CD4-positive, alpha-beta memory T cell (primary cell): ENCODE measurements at regions of chr19 and their contacts with region 1.

Region 1: DNA sequence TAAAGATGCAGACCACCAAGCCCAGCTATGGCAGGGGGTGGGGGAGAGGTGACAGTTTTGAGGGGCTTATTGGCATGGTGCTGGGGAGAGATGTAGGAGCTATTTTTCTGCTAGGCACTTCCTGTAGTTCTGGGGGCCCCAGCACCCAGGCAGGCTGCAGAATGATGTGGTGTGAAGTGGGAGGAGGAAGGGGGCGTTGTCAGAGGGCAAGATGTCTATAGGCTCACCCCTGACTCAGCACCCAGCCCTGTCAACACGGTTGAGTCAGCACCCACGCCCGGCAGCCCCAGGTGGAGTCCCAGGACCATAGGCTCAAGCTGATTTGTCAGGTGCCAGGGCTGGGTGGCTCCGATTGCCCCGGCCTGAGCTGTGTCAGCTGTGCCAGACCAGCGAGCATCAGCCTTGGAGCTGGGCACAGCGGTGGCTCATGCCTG is 5.8 kb downstream of the KLF2 start:
- DNase-seq: peak; percentile 93 to 99 (median 96)
- H3K4me3 ChIP-seq: peak overlapping the region in 1 of 2 donors; percentile 11
- H3K4me3 Mint-ChIP-seq: peak overlapping the region; percentile 97 to 100 (median 99)
- H3K27ac ChIP-seq: peak overlapping the region; percentile 83
- H3K27ac Mint-ChIP-seq: peak overlapping the region; percentile 92 to 99 (median 98)
- H3K4me1 ChIP-seq: peaks cover 38% of the 10 kb centered on the region
- H3K4me1 Mint-ChIP-seq: peaks cover 25 to 77% (median 37%) of the 10 kb centered on the region in 4 donors
- H3K27me3 ChIP-seq: no peaks in the 10 kb centered on the region
- H3K27me3 Mint-ChIP-seq: peaks cover 0 to 7% of the 10 kb centered on the region in 2 donors

Region 2: GRCh38 chr19:16070366-16070990 is 259.9 kb before region 1 on chr19:
- CTCF ChIA-PET with region 1: no interaction called
- POLR2A ChIA-PET with region 1: interaction called, 29 read pairs
- intact Hi-C with region 1: loop called (anchors 5 kb)
- DNase-seq: peak; percentile 87 to 98 (median 94)
- H3K4me3 ChIP-seq: peak overlapping the region in 1 of 2 donors; percentile 46
- H3K4me3 Mint-ChIP-seq: peak overlapping the region in 3 of 8 donors; percentile 60 to 80 (median 77)
- H3K27ac ChIP-seq: peak overlapping the region; percentile 89
- H3K27ac Mint-ChIP-seq: no peak overlapping the region
- H3K4me1 ChIP-seq: peaks cover 78% of the 10 kb centered on the region
- H3K4me1 Mint-ChIP-seq: peaks cover 25 to 46% (median 38%) of the 10 kb centered on the region in 4 donors
- H3K27me3 ChIP-seq: no peaks in the 10 kb centered on the region
- H3K27me3 Mint-ChIP-seq: no peaks in the 10 kb centered on the region

Region 3: DNA sequence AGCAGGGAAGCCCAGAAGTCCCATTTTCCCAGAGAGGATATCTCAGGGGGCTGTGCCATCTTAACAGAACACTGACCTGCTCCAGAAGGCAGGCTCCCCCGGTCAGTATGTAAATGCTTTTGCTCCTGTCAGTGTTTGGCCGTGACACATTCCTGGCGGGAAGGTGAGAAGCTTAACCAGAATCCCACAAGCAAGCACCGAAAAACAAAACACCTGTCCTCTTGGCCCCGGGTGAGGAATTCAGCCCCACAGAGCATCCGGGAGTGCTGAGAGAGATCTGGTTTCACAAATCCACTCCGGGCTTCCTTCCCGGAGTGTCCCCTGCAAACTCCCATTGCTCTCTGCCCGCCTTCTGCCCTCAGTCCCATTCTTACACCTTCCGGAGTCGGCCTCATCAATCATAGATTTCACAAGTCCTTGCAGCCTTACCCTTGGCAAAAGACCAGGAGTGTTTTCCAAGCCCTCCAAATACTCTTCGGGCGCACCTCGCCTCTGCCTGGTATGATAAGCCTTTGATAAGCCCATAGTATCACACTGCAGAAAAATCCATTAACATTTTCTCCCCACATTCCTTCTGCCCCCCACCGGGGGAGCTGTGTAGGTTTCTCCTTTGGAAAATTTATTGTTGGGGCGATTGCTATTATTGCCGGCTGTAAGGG is 241.9 kb before region 1 on chr19:
- CTCF ChIA-PET with region 1: no interaction called
- POLR2A ChIA-PET with region 1: interaction called, 14 read pairs
- intact Hi-C with region 1: no loop called
- DNase-seq: peak in 1 of 5 donors; percentile 10
- H3K4me3 ChIP-seq: no peak overlapping the region
- H3K4me3 Mint-ChIP-seq: peak overlapping the region in 4 of 8 donors; percentile 15 to 54 (median 34)
- H3K27ac ChIP-seq: no peak overlapping the region
- H3K27ac Mint-ChIP-seq: peak overlapping the region; percentile 61 to 82 (median 72)
- H3K4me1 ChIP-seq: peaks cover 53% of the 10 kb centered on the region
- H3K4me1 Mint-ChIP-seq: peaks cover 27 to 58% (median 36%) of the 10 kb centered on the region in 4 donors
- H3K27me3 ChIP-seq: no peaks in the 10 kb centered on the region
- H3K27me3 Mint-ChIP-seq: no peaks in the 10 kb centered on the region

Region 4: DNA sequence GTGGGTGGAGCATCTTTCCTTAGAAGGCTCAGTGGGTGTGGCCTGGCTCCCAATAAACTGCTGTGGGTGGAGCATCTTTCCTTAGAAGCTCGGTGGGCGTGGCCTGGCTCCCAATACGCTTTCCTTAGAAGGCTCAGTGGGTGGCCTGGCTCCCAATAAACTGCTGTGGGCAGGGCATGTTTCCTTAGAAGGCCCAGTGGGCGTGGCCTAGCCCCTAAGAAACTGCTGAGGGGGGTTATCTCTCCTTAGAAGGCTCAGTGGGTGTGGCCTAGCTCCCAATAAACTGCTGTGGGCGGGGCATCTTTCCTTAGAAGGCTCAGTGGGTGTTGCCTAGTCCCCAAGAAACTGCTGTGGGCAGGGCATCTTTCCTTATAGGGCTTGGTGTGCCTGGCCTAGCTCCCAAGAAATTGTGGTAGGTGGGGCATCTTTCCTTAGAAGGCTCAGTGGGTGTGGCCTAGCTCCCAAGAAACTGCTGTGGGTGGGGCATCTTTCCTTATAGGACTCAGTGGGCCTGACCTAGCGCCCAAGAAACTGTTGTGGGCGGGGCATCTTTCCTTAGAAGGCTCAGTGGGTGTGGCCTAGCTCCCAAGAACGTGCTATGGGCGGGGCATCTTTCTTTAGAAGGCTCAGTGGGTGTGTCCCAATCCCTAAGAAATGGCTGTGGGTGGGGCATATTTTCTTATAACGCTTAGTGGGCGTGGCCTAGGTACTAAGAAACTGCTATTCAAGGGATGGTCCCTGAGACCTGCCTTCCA is 176.6 kb before region 1 on chr19:
- CTCF ChIA-PET with region 1: no interaction called
- POLR2A ChIA-PET with region 1: no interaction called
- intact Hi-C with region 1: no loop called
- DNase-seq: no peak
- H3K4me3 ChIP-seq: no peak overlapping the region
- H3K4me3 Mint-ChIP-seq: no peak overlapping the region
- H3K27ac ChIP-seq: no peak overlapping the region
- H3K27ac Mint-ChIP-seq: peak overlapping the region in 1 of 7 donors; percentile 86
- H3K4me1 ChIP-seq: no peaks in the 10 kb centered on the region
- H3K4me1 Mint-ChIP-seq: peaks cover 0 to 4% (median under 1%) of the 10 kb centered on the region in 4 donors
- H3K27me3 ChIP-seq: no peaks in the 10 kb centered on the region
- H3K27me3 Mint-ChIP-seq: no peaks in the 10 kb centered on the region

Region 5: DNA sequence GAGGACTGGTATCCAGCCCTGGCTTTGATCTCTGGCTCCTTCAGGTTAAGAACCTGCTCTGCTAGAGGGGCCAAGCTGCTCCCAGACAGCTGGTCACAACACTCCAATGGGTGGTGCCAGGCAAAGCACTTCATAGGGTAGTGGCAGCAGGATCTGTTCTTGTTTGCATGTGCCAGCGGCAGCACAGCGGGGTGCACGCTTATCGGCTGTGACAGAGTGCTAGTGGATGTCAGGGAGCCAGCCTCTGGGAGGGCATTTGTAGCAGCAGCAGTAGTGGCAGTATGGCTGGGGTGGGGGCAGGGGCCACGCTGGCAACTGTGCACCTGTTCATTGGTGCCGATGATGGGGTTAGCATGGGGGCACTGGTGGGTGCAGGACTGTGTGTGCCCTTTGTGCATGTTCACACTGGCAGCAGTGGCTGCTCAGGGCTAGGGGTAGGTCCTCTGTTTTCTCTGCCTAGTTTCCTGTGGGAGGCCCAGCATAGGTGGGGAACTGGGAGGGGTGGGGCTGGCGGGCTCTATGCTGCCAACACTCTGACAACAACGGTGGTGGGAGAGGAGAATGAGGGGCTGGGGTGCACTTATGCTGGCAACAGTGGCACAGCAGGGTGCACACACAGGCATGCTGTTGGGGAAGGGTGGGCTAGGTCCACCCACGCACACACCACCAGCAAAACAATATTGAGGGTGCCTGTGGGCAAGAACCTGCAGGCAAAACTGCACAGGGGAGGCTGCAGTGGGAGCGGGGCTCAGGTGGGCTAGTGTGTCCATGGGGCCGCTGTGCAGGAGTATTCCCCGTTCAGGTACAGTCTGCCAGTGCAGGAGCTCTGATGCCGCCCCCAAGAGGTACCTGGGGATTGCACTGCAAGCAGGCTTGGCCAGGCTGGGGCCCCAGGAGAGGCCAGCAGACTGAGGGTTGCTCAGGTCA is 113.4 kb before region 1 on chr19:
- CTCF ChIA-PET with region 1: no interaction called
- POLR2A ChIA-PET with region 1: no interaction called
- intact Hi-C with region 1: no loop called
- DNase-seq: peak in 3 of 5 donors; percentile 6 to 16 (median 11)
- H3K4me3 ChIP-seq: no peak overlapping the region
- H3K4me3 Mint-ChIP-seq: peak overlapping the region in 7 of 8 donors; percentile 50 to 85 (median 59)
- H3K27ac ChIP-seq: no peak overlapping the region
- H3K27ac Mint-ChIP-seq: peak overlapping the region; percentile 11 to 86 (median 77)
- H3K4me1 ChIP-seq: peaks cover 28% of the 10 kb centered on the region
- H3K4me1 Mint-ChIP-seq: peaks cover 31 to 64% (median 41%) of the 10 kb centered on the region in 4 donors
- H3K27me3 ChIP-seq: no peaks in the 10 kb centered on the region
- H3K27me3 Mint-ChIP-seq: no peaks in the 10 kb centered on the region

Region 6: GRCh38 chr19:16252459-16253205 is 77.8 kb before region 1 on chr19:
- CTCF ChIA-PET with region 1: interaction called, 45 read pairs
- POLR2A ChIA-PET with region 1: interaction called, 342 read pairs
- intact Hi-C with region 1: no loop called
- DNase-seq: no peak
- H3K4me3 ChIP-seq: no peak overlapping the region
- H3K4me3 Mint-ChIP-seq: no peak overlapping the region
- H3K27ac ChIP-seq: no peak overlapping the region
- H3K27ac Mint-ChIP-seq: no peak overlapping the region
- H3K4me1 ChIP-seq: peaks cover 16% of the 10 kb centered on the region
- H3K4me1 Mint-ChIP-seq: peaks cover 7 to 30% (median 19%) of the 10 kb centered on the region in 4 donors
- H3K27me3 ChIP-seq: no peaks in the 10 kb centered on the region
- H3K27me3 Mint-ChIP-seq: no peaks in the 10 kb centered on the region

Region 7: GRCh38 chr19:16315825-16316505 is 14.4 kb before region 1 on chr19:
- CTCF ChIA-PET with region 1: no interaction called
- POLR2A ChIA-PET with region 1: interaction called, 16 read pairs
- intact Hi-C with region 1: no loop called
- DNase-seq: no peak
- H3K4me3 ChIP-seq: no peak overlapping the region
- H3K4me3 Mint-ChIP-seq: no peak overlapping the region
- H3K27ac ChIP-seq: no peak overlapping the region
- H3K27ac Mint-ChIP-seq: peak overlapping the region in 3 of 7 donors; percentile 9 to 55 (median 34)
- H3K4me1 ChIP-seq: peaks cover 13% of the 10 kb centered on the region
- H3K4me1 Mint-ChIP-seq: peaks cover 5 to 15% (median 10%) of the 10 kb centered on the region in 4 donors
- H3K27me3 ChIP-seq: no peaks in the 10 kb centered on the region
- H3K27me3 Mint-ChIP-seq: no peaks in the 10 kb centered on the region

Region 8: DNA sequence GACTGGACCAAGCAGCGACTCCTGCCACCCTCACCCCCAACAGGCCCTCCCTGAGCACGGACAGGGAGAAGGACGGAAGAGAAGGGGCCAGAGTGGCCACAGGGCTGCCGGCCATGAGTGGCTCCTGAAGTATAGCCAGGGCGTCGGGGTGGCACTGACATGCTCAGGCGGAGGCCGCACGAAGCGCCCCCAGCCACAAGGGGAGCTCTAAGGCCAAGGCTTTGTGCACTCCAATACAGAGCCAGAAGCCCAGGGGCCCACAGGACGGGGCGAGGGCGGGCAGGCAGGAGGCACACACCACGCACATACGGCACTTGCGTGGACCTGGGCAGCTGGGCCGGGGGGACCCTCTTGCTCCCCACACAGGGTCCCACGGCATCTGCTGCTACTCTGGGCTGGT is 46.3 kb after region 1 on chr19:
- CTCF ChIA-PET with region 1: interaction called, 143 read pairs
- POLR2A ChIA-PET with region 1: interaction called, 6,478 read pairs
- intact Hi-C with region 1: no loop called
- DNase-seq: peak in 1 of 5 donors; percentile 23
- H3K4me3 ChIP-seq: no peak overlapping the region
- H3K4me3 Mint-ChIP-seq: peak overlapping the region in 3 of 8 donors; percentile 5 to 57 (median 31)
- H3K27ac ChIP-seq: peak overlapping the region; percentile 35
- H3K27ac Mint-ChIP-seq: peak overlapping the region in 5 of 7 donors; percentile 9 to 97 (median 82)
- H3K4me1 ChIP-seq: peaks cover 99% of the 10 kb centered on the region
- H3K4me1 Mint-ChIP-seq: peaks cover 24 to 63% (median 47%) of the 10 kb centered on the region in 4 donors
- H3K27me3 ChIP-seq: no peaks in the 10 kb centered on the region
- H3K27me3 Mint-ChIP-seq: no peaks in the 10 kb centered on the region